ENCODE measurements at regions of chr7 and their contacts with region 1.

Region 1: GRCh38 chr7:51315393-51316261 is 982 bp downstream of the COBL start:
- DNase-seq: no peak

Region 2: GRCh38 chr7:51154201-51154600 is 161.4 kb before region 1 on chr7:
- intact Hi-C with region 1: no loop called
- DNase-seq: no peak

Region 3: DNA sequence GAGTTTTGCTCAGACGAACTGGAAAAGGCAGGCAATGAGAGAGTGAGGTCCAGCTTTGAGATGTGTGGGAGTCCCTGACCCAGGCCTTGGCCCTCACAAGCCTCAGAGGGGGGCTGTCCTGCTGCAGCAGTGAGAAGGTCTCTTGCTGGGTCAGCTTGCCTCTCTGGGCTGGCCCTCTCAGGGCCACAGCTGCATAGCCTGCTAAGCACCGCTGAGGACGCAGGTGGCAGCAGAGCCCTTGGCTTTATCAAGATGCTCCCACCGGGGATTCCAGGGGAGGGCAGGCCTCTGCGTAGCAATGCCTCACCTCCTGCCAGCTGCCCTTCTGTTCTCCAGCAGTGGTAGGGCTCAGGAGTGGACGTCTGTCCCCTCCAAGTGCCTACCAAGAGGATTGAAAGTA is 127.7 kb before region 1 on chr7:
- intact Hi-C with region 1: loop called (anchors 5 kb)
- DNase-seq: no peak

Region 4: DNA sequence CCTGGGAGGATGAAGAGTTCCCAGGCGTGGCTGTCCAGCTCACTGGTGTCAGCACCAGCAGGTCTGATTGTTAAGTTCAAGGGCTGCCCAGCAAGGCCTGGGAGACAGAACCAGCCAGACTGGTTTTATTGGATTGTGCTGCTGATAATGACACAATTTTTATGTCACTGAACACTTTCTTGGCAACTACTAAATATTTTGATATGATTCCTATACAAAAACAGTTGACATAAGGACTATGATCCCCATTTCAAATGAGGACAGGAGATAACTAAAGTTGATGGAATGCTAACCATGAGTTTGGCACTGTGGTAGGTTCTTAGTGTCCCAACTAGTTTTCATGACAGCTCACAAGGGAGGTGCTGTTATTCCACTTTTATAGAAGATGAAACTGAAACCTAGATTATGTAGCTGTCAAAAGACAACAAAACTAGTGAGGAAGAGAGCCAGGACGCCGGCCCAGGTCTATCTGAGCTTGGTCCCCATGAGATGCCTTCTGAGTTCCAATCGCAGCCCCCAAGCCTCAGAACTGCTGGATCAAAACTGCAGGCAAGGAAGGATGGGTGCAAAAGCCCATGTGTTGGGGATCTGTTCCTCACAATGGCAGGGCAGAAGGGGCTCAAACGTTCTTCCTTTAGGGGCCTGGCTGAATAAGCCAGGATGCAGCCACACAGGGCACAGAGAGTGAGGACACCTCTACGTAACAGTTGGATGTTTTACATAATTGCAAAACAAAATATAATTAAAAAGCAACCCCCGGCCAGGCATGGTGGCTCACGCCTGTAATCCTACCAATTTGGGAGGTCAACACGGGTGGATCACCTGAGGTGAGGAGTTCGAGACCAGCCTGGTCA is 51.8 kb before region 1 on chr7:
- intact Hi-C with region 1: loop called (anchors 2 kb)
- DNase-seq: no peak

Region 5: GRCh38 chr7:51357821-51358220 is 42.2 kb after region 1 on chr7:
- intact Hi-C with region 1: loop called (anchors 5 kb)
- DNase-seq: no peak